ENCODE measurements at regions of chr12 and their contacts with region 1.

Region 1: DNA sequence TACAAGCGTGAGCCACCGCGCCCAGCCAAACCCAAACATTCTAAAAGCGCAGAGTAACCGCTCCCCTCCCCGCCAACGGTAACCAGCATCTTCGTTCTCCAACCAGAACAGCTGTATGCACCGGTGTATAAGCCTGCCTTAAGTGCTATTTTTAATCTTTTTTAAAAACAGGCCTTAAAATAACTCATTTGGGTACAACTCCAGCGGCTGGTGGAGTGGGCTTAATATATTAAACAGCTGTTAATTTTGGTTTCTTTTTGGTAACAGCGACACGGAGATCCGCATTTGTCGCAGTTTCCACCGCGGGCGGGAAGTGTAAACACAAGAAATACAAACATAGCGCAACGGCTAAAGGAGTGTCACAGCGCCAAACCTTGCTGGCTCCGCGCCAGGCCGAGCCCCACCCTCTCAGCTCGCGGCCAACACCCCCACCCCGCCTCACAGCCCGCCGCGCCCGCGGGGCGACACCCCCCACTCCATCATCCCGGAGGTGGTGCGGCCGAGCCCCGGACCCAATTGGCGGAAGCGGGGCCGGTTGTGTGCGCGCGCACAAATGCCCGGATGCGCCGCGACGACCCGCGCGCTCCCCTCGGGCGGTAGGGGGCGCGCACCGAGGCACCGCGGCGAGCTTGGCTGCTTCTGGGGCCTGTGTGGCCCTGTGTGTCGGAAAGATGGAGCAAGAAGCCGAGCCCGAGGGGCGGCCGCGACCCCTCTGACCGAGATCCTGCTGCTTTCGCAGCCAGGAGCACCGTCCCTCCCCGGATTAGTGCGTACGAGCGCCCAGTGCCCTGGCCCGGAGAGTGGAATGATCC is at the start of gene MDM2:
- DNase-seq: peak; percentile 92 to 99 (median 96)
- ATAC-seq: peak; percentile 91
- H3K4me3 ChIP-seq: peak within 1 kb of the TSS; percentile 95
- H3K4me3 Mint-ChIP-seq: peak within 1 kb of the TSS; percentile 94
- H3K27ac ChIP-seq: peak within 1 kb of the TSS; percentile 92
- H3K27ac Mint-ChIP-seq: peak within 1 kb of the TSS; percentile 100
- H3K4me1 ChIP-seq: peaks cover 17% of the 10 kb centered on the region
- H3K4me1 Mint-ChIP-seq: peaks cover 34% of the 10 kb centered on the region
- H3K27me3 ChIP-seq: no peaks in the 10 kb centered on the region
- H3K27me3 Mint-ChIP-seq: no peaks in the 10 kb centered on the region
- CTCF ChIP-seq: peak; percentile 68
- total RNA-seq, gene MDM2: 90.8 TPM

Region 2: GRCh38 chr12:68331869-68332727 is 475.7 kb before region 1 on chr12 and contains the start of gene MDM1:
- CTCF ChIA-PET with region 1: no interaction called
- POLR2A ChIA-PET with region 1: interaction called, 16 read pairs
- intact Hi-C with region 1: loop called in 1 of 2 experiments (anchors 5 kb)
- DNase-seq: peak; percentile 85 to 99 (median 94)
- ATAC-seq: peak; percentile 96
- H3K4me3 ChIP-seq: peak within 1 kb of the TSS; percentile 66
- H3K4me3 Mint-ChIP-seq: peak within 1 kb of the TSS; percentile 91
- H3K27ac ChIP-seq: peak within 1 kb of the TSS; percentile 30 to 66
- H3K27ac Mint-ChIP-seq: peak within 1 kb of the TSS; percentile 84
- H3K4me1 ChIP-seq: peaks cover 25% of the 10 kb centered on the region
- H3K4me1 Mint-ChIP-seq: peaks cover 59% of the 10 kb centered on the region
- H3K27me3 ChIP-seq: no peaks in the 10 kb centered on the region
- H3K27me3 Mint-ChIP-seq: no peaks in the 10 kb centered on the region
- CTCF ChIP-seq: no peak
- total RNA-seq, gene MDM1: 11.0 to 11.6 TPM

Region 3: GRCh38 chr12:68538726-68539614 is 268.8 kb before region 1 on chr12:
- CTCF ChIA-PET with region 1: no interaction called
- POLR2A ChIA-PET with region 1: interaction called, 11 read pairs
- intact Hi-C with region 1: no loop called
- DNase-seq: peak; percentile 20 to 91 (median 42)
- ATAC-seq: peak; percentile 94
- H3K4me3 ChIP-seq: peak overlapping the region; percentile 5
- H3K4me3 Mint-ChIP-seq: peak overlapping the region; percentile 49
- H3K27ac ChIP-seq: no peak overlapping the region
- H3K27ac Mint-ChIP-seq: peak overlapping the region; percentile 80
- H3K4me1 ChIP-seq: peaks cover 16% of the 10 kb centered on the region
- H3K4me1 Mint-ChIP-seq: peaks cover 65% of the 10 kb centered on the region
- H3K27me3 ChIP-seq: no peaks in the 10 kb centered on the region
- H3K27me3 Mint-ChIP-seq: no peaks in the 10 kb centered on the region
- CTCF ChIP-seq: no peak

Region 4: GRCh38 chr12:68772714-68773113 is 35.1 kb before region 1 on chr12:
- CTCF ChIA-PET with region 1: no interaction called
- POLR2A ChIA-PET with region 1: interaction called, 15 read pairs
- intact Hi-C with region 1: no loop called
- DNase-seq: peak in 1 of 14 experiments; percentile 23
- ATAC-seq: no peak
- H3K4me3 ChIP-seq: no peak overlapping the region
- H3K4me3 Mint-ChIP-seq: peak overlapping the region; percentile 43
- H3K27ac ChIP-seq: no peak overlapping the region
- H3K27ac Mint-ChIP-seq: peak overlapping the region; percentile 72
- H3K4me1 ChIP-seq: peaks cover 10% of the 10 kb centered on the region
- H3K4me1 Mint-ChIP-seq: peaks cover 31% of the 10 kb centered on the region
- H3K27me3 ChIP-seq: no peaks in the 10 kb centered on the region
- H3K27me3 Mint-ChIP-seq: no peaks in the 10 kb centered on the region
- CTCF ChIP-seq: no peak

Region 5: GRCh38 chr12:68844318-68844745 is 36.5 kb after region 1 on chr12:
- CTCF ChIA-PET with region 1: no interaction called
- POLR2A ChIA-PET with region 1: no interaction called
- intact Hi-C with region 1: no loop called
- DNase-seq: no peak
- ATAC-seq: no peak
- H3K4me3 ChIP-seq: no peak overlapping the region
- H3K4me3 Mint-ChIP-seq: no peak overlapping the region
- H3K27ac ChIP-seq: no peak overlapping the region
- H3K27ac Mint-ChIP-seq: peak overlapping the region; percentile 27
- H3K4me1 ChIP-seq: no peaks in the 10 kb centered on the region
- H3K4me1 Mint-ChIP-seq: no peaks in the 10 kb centered on the region
- H3K27me3 ChIP-seq: no peaks in the 10 kb centered on the region
- H3K27me3 Mint-ChIP-seq: no peaks in the 10 kb centered on the region
- CTCF ChIP-seq: no peak

Region 6: GRCh38 chr12:69239352-69239921 is 431.7 kb after region 1 on chr12 and contains the start of gene CPSF6:
- CTCF ChIA-PET with region 1: no interaction called
- POLR2A ChIA-PET with region 1: no interaction called
- intact Hi-C with region 1: loop called in 1 of 2 experiments (anchors 10 kb)
- DNase-seq: peak; percentile 93 to 99 (median 96)
- ATAC-seq: peak; percentile 85
- H3K4me3 ChIP-seq: peak within 1 kb of the TSS; percentile 87
- H3K4me3 Mint-ChIP-seq: peak within 1 kb of the TSS; percentile 97
- H3K27ac ChIP-seq: peak within 1 kb of the TSS; percentile 85 to 86
- H3K27ac Mint-ChIP-seq: peak within 1 kb of the TSS; percentile 99
- H3K4me1 ChIP-seq: peaks cover 30% of the 10 kb centered on the region
- H3K4me1 Mint-ChIP-seq: peaks cover 59% of the 10 kb centered on the region
- H3K27me3 ChIP-seq: no peaks in the 10 kb centered on the region
- H3K27me3 Mint-ChIP-seq: no peaks in the 10 kb centered on the region
- CTCF ChIP-seq: no peak
- total RNA-seq, gene CPSF6: 80.9 to 86.7 TPM

Region 7: DNA sequence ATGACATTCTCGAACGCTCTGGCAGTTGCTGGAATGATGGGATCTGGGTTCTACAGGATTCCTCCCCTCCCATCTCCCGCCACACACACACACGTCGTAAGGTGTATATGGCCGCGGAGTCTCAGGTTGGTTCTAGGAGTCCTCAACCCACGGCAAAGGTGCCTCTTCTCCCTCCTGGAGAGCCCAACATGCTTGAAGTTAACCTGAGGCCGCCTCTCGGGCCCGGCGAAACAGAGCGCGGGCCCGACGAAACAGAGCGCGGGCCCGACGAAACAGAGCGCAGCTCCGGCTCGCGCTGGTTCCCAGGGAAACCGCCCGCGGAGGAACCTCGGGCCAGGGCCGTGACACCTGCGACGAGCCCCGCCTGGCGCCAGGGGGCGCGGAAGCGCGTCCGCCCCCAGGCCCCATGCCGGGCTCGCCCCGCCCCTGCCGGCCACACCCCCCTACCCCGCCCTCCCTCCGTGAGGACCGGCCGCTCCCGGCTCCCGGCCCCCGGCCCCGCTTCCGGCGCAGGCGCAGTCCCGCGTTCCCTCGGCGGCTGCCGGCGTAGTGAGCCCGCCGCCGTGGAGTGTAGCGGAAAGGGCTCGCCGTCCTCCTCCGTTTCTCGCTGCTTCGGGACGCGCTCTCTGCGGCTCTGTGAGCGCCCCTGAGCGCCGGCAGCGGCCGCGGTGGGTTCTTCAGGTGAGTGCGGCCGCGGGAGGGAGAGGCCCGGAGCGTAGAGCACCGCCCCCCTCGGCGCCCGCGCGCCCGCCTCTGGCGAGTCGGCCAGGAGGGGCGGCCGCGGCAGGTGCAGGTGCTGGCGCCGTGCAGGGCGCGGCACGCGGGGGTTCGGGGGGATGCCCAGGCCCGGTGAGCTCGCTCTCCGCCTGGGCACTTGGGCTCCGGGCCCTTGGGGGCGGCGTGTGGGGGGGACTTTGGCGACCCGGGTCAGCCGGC is 930.8 kb after region 1 on chr12 and contains the start of gene RAB3IP:
- CTCF ChIA-PET with region 1: no interaction called
- POLR2A ChIA-PET with region 1: no interaction called
- intact Hi-C with region 1: loop called in 1 of 2 experiments (anchors 10 kb)
- DNase-seq: peak; percentile 84 to 98 (median 92)
- ATAC-seq: peak; percentile 84
- H3K4me3 ChIP-seq: peak within 1 kb of the TSS; percentile 82
- H3K4me3 Mint-ChIP-seq: peak within 1 kb of the TSS; percentile 86
- H3K27ac ChIP-seq: peak within 1 kb of the TSS; percentile 48 to 68
- H3K27ac Mint-ChIP-seq: peak within 1 kb of the TSS; percentile 80
- H3K4me1 ChIP-seq: peaks cover 11% of the 10 kb centered on the region
- H3K4me1 Mint-ChIP-seq: peaks cover 27% of the 10 kb centered on the region
- H3K27me3 ChIP-seq: no peaks in the 10 kb centered on the region
- H3K27me3 Mint-ChIP-seq: peaks cover 6% of the 10 kb centered on the region
- CTCF ChIP-seq: peak; percentile 75
- total RNA-seq, gene RAB3IP: 15.2 to 19.6 TPM

Measured in CD4-positive, alpha-beta T cell (primary cell).